Activated CD8-positive, alpha-beta T cell treated with anti-CD3 and anti-CD28 coated beads for 36 hours (primary cell): ENCODE measurements at regions of chr21 and their contacts with region 1.

Region 1: DNA sequence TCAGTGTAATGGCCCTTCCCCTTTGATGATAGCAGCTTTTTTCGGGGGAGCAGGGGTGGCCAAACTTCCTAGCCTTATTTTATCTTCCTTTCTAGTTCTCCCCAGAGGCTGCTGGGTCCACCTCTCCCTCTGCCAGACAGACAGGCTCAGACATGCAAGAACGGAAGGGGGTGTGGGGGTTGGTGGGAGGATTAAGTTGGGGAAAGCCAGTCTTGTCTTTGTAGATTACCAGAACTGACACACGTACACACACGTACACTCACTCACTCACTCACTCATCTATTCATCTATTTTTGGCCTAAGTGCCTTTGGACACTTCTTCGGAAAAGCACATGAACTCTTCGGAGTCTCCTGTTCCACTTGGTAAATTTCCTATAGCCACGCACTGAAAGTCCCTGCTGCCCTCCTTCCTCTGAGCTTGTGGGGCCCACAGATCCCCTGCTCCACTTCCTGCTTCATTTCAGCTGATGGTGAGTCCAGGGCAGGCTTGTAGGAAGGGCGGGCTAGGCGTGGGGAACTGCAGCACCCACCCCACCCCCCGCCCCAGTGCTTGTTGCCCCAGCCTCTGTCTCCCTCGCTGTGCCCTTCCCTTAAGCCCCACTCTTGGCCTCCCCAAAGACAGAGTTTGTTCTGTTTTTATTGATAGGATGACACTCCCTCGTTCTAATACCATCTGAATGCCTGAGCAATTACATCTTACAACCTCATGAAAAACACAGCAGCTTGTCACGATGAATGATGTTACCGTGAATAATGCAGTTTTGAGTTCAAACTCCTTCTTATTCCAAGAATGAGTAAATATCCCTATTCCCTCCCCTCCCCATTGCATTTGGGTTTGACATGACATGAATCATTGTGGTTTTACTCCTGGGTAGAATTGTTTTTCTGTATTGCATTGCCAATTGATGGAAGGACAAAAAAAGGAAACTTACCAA is 60.7 kb upstream of the ATP5PO start:
- DNase-seq: peak; percentile 78
- ATAC-seq: peak; percentile 45
- H3K4me3 Mint-ChIP-seq: peak overlapping the region; percentile 70
- H3K27ac Mint-ChIP-seq: peak overlapping the region; percentile 99
- H3K4me1 Mint-ChIP-seq: peaks cover 71% of the 10 kb centered on the region
- H3K27me3 Mint-ChIP-seq: no peaks in the 10 kb centered on the region
- CTCF ChIP-seq: no peak

Region 2: GRCh38 chr21:33751120-33751519 is 225.2 kb before region 1 on chr21:
- CTCF ChIA-PET with region 1: no interaction called
- POLR2A ChIA-PET with region 1: no interaction called
- intact Hi-C with region 1: no loop called
- DNase-seq: no peak
- ATAC-seq: no peak
- H3K4me3 Mint-ChIP-seq: no peak overlapping the region
- H3K27ac Mint-ChIP-seq: no peak overlapping the region
- H3K4me1 Mint-ChIP-seq: no peaks in the 10 kb centered on the region
- H3K27me3 Mint-ChIP-seq: no peaks in the 10 kb centered on the region
- CTCF ChIP-seq: no peak

Region 3: GRCh38 chr21:33931799-33932390 is 44.5 kb before region 1 on chr21:
- CTCF ChIA-PET with region 1: interaction called, 3 read pairs
- POLR2A ChIA-PET with region 1: interaction called, 66 read pairs
- intact Hi-C with region 1: loop called (anchors 5 kb)
- DNase-seq: no peak
- ATAC-seq: no peak
- H3K4me3 Mint-ChIP-seq: peak overlapping the region; percentile 91
- H3K27ac Mint-ChIP-seq: peak overlapping the region; percentile 99
- H3K4me1 Mint-ChIP-seq: peaks cover 33% of the 10 kb centered on the region
- H3K27me3 Mint-ChIP-seq: no peaks in the 10 kb centered on the region
- CTCF ChIP-seq: no peak

Region 4: DNA sequence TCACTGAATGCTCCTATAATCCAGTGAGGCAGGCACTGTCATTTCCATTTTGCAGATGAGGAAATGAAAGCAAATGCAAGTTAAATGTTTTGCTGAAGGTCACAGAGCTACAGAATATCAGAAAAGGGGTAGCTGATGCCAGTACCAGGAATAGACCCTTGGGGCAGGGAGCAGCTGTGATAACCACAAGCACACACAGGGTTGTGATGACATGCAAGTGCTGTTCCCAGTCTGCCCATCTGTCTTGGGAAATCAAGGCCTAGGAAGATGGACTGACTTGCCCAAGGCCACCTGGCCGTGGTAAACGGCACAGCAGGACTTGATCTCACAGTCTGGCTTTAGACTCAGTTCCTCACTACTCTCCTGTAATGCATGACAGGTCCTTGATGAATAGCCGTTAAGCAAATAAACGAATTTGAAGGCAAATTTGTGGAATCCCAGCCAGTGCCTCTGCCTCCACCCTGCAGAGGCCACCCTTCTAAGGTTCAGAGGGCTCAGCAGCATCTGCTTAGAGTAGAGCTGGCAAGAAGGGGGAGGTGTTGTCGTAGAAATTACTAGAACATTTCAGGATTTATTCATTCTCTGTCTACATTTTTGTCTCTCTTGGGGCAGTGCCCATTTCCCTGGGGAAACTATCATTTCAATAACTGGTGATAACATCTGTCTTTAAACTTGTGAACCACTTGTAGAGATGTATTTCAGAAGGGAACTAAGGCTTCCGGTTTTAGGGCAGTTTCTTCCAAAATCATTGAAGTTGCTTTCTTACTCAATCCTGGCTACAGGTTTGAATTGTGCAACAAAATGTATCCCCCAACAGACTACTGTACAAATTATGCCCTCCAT is 43.9 kb after region 1 on chr21:
- CTCF ChIA-PET with region 1: no interaction called
- POLR2A ChIA-PET with region 1: no interaction called
- intact Hi-C with region 1: loop called (anchors 5 kb)
- DNase-seq: no peak
- ATAC-seq: no peak
- H3K4me3 Mint-ChIP-seq: no peak overlapping the region
- H3K27ac Mint-ChIP-seq: peak overlapping the region; percentile 2
- H3K4me1 Mint-ChIP-seq: peaks cover 23% of the 10 kb centered on the region
- H3K27me3 Mint-ChIP-seq: no peaks in the 10 kb centered on the region
- CTCF ChIP-seq: no peak

Region 5: GRCh38 chr21:34078915-34079314 is 102.6 kb after region 1 on chr21:
- CTCF ChIA-PET with region 1: interaction called, 3 read pairs
- POLR2A ChIA-PET with region 1: interaction called, 5 read pairs
- intact Hi-C with region 1: loop called (anchors 5 kb)
- DNase-seq: peak; percentile 62
- ATAC-seq: peak; percentile 15
- H3K4me3 Mint-ChIP-seq: peak overlapping the region; percentile 65
- H3K27ac Mint-ChIP-seq: peak overlapping the region; percentile 92
- H3K4me1 Mint-ChIP-seq: peaks cover 88% of the 10 kb centered on the region
- H3K27me3 Mint-ChIP-seq: no peaks in the 10 kb centered on the region
- CTCF ChIP-seq: no peak